ENCODE measurements at regions of chr13 and their contacts with region 1.

Region 1: DNA sequence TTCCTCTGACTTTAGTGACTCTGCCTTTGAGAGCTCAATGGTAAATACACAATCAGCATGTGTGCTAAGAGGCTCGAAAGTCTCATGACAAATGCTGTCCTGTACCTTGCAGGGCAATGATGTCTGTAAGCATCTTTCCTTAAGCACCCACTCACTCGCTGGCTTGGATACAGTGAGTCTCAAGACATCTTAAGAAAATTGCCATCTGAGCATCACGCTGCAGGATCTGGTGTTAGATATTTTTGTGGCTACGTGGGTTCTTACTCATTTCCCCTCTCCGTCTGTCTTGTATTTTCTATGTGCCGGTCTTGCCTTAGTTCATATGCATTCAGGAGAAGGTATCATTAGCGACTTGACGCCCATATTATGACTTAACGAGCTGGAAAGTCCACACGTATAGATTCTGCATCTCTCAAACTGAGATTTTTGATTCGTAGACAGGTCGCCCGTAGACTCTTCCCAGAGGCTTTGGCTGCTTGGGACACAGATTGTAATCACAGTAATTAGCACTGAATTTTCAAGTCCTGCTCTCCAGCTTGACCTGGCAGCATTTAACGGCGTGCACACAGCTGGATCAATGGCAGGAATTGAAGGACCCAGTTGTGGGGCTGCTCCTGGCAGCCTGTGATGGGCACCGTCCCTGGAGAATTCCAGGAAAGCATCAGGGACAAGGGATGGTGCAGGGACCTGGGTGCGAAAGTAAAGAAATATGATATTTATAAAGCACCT is 231.2 kb downstream of the ZIC5 start:
- DNase-seq: no peak
- ATAC-seq: no peak
- H3K4me3 ChIP-seq: no peak overlapping the region
- H3K27ac ChIP-seq: no peak overlapping the region
- H3K4me1 ChIP-seq: peaks cover 0 to 13% (median 3%) of the 10 kb centered on the region in 12 donors
- H3K27me3 ChIP-seq: no peaks in the 10 kb centered on the region
- CTCF ChIP-seq: no peak
- POLR2A ChIP-seq: no peak

Region 2: GRCh38 chr13:99709134-99709533 is 31.3 kb before region 1 on chr13:
- intact Hi-C with region 1: loop called in 1 of 10 experiments (anchors 5 kb)
- DNase-seq: no peak
- ATAC-seq: no peak
- H3K4me3 ChIP-seq: no peak overlapping the region
- H3K27ac ChIP-seq: no peak overlapping the region
- H3K4me1 ChIP-seq: no peaks in the 10 kb centered on the region
- H3K27me3 ChIP-seq: no peaks in the 10 kb centered on the region
- CTCF ChIP-seq: no peak
- POLR2A ChIP-seq: no peak

Region 3: GRCh38 chr13:100315522-100315921 is 575.1 kb after region 1 on chr13:
- intact Hi-C with region 1: no loop called
- DNase-seq: no peak
- ATAC-seq: no peak
- H3K4me3 ChIP-seq: no peak overlapping the region
- H3K27ac ChIP-seq: no peak overlapping the region
- H3K4me1 ChIP-seq: no peaks in the 10 kb centered on the region
- H3K27me3 ChIP-seq: no peaks in the 10 kb centered on the region
- CTCF ChIP-seq: no peak
- POLR2A ChIP-seq: no peak